PC-3 (cell line): ENCODE measurements at regions of chr6 and their contacts with region 1.

Region 1: GRCh38 chr6:62974452-62974851 is 236.8 kb upstream of the FKBP1C start:
- DNase-seq: no peak
- ATAC-seq: no peak
- H3K4me3 ChIP-seq: no peak overlapping the region
- H3K27ac ChIP-seq: no peak overlapping the region
- H3K4me1 ChIP-seq: no peaks in the 10 kb centered on the region
- H3K27me3 ChIP-seq: no peaks in the 10 kb centered on the region
- CTCF ChIP-seq: no peak

Region 2: DNA sequence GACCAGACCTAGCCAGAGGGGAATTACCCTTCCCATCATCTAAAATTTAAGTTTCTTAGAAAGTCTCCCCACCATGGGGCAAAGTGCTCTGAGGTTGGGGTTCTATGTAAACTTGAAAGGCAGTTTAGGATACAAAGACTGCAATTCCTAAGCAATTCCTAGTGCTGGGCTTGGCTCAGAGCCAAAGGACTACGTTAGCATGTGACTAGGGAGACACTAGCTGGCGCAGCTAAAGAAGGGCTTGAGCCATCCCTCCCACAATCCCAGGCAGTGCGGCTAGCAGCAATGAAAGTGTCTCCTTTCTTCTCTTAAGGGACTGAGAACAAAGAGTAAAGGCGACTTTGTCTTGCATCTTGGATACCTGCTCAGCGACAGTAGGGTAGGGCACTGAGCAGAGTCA is 69.8 kb before region 1 on chr6:
- CTCF ChIA-PET with region 1: no interaction called
- POLR2A ChIA-PET with region 1: interaction called, 19 read pairs
- intact Hi-C with region 1: no loop called
- DNase-seq: no peak
- ATAC-seq: no peak
- H3K4me3 ChIP-seq: no peak overlapping the region
- H3K27ac ChIP-seq: no peak overlapping the region
- H3K4me1 ChIP-seq: no peaks in the 10 kb centered on the region
- H3K27me3 ChIP-seq: no peaks in the 10 kb centered on the region
- CTCF ChIP-seq: no peak